B cell (primary cell): ENCODE measurements at regions of chr9 and their contacts with region 1.

Region 1: GRCh38 chr9:74952281-74953151 is at the start of gene C9orf40:
- DNase-seq: peak; percentile 93
- ATAC-seq: peak; percentile 89
- H3K4me3 ChIP-seq: peak within 1 kb of the TSS; percentile 65 to 91 (median 84)
- H3K4me3 Mint-ChIP-seq: peak within 1 kb of the TSS; percentile 95
- H3K27ac ChIP-seq: peak within 1 kb of the TSS; percentile 80 to 86
- H3K27ac Mint-ChIP-seq: peak within 1 kb of the TSS; percentile 95
- H3K4me1 ChIP-seq: peaks cover 9 to 15% of the 10 kb centered on the region in 2 donors
- H3K4me1 Mint-ChIP-seq: peaks cover 19% of the 10 kb centered on the region
- H3K27me3 ChIP-seq: no peaks in the 10 kb centered on the region
- H3K27me3 Mint-ChIP-seq: no peaks in the 10 kb centered on the region
- CTCF ChIP-seq: peak; percentile 78
- total RNA-seq, gene C9orf40: 5.0 and 5.8 TPM in 2 replicates

Region 2: GRCh38 chr9:74528207-74528606 is 424.3 kb before region 1 on chr9:
- CTCF ChIA-PET with region 1: no interaction called
- POLR2A ChIA-PET with region 1: no interaction called
- intact Hi-C with region 1: no loop called
- DNase-seq: no peak
- ATAC-seq: no peak
- H3K4me3 ChIP-seq: no peak overlapping the region
- H3K4me3 Mint-ChIP-seq: no peak overlapping the region
- H3K27ac ChIP-seq: no peak overlapping the region
- H3K27ac Mint-ChIP-seq: no peak overlapping the region
- H3K4me1 ChIP-seq: no peaks in the 10 kb centered on the region
- H3K4me1 Mint-ChIP-seq: no peaks in the 10 kb centered on the region
- H3K27me3 ChIP-seq: peaks cover 0 to 7% (median 0%) of the 10 kb centered on the region in 4 experiments
- H3K27me3 Mint-ChIP-seq: peaks cover 3% of the 10 kb centered on the region
- CTCF ChIP-seq: no peak

Region 3: GRCh38 chr9:74696520-74696919 is 256.0 kb before region 1 on chr9:
- CTCF ChIA-PET with region 1: no interaction called
- POLR2A ChIA-PET with region 1: no interaction called
- intact Hi-C with region 1: no loop called
- DNase-seq: no peak
- ATAC-seq: no peak
- H3K4me3 ChIP-seq: no peak overlapping the region
- H3K4me3 Mint-ChIP-seq: no peak overlapping the region
- H3K27ac ChIP-seq: no peak overlapping the region
- H3K27ac Mint-ChIP-seq: no peak overlapping the region
- H3K4me1 ChIP-seq: no peaks in the 10 kb centered on the region
- H3K4me1 Mint-ChIP-seq: no peaks in the 10 kb centered on the region
- H3K27me3 ChIP-seq: peaks cover 0 to 7% (median 0%) of the 10 kb centered on the region in 4 experiments
- H3K27me3 Mint-ChIP-seq: peaks cover 21% of the 10 kb centered on the region
- CTCF ChIP-seq: no peak

Region 4: GRCh38 chr9:75001719-75002422 is 49.4 kb after region 1 on chr9:
- CTCF ChIA-PET with region 1: interaction called, 9 read pairs
- POLR2A ChIA-PET with region 1: no interaction called
- intact Hi-C with region 1: loop called (anchors 1 kb)
- DNase-seq: peak; percentile 84
- ATAC-seq: peak; percentile 84
- H3K4me3 ChIP-seq: no peak overlapping the region
- H3K4me3 Mint-ChIP-seq: no peak overlapping the region
- H3K27ac ChIP-seq: no peak overlapping the region
- H3K27ac Mint-ChIP-seq: no peak overlapping the region
- H3K4me1 ChIP-seq: no peaks in the 10 kb centered on the region
- H3K4me1 Mint-ChIP-seq: peaks cover 5% of the 10 kb centered on the region
- H3K27me3 ChIP-seq: no peaks in the 10 kb centered on the region
- H3K27me3 Mint-ChIP-seq: no peaks in the 10 kb centered on the region
- CTCF ChIP-seq: peak; percentile 95

Region 5: DNA sequence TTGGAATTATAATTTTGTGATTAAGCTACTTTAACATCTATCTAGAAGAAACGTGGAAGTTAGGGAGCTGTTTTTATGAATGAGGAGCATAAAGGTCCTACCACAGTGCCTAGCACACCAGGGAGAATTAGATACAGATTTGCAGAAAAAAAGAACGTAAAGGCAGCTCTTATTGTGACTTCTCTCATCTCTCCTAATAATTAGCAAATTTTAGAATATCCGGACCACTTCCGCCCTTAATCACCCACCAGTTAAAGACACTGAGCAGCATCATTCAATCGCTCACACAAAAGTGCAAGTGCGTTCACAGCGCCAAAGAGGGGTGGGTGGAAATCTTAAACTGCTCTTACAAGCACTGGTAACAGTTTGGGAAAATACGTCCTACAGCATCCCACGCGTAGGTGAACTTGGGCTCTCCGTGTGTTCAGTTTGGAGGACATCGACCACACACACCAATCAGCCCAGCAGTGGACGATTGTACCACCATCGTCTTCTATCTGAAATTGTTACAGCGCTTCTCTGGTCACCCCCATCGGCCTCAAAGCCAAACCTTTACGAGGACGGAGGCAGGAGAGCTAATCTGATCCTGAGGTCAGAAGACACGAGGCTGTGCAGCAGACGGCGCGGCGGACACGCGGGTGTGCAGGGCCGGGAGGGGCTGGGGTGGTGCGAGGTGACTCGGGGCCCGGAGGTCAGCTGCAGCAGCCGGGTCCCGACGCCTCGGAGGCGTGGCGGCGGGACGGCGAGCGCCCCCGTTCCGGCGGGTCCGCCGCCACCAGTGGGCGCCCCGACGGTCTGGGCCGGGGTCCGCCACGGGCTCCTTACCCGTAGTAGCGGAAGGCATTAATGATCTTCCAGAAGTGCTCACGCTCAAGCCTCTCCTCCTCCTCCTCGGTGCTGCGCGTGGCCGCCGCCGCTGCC is 74.9 kb after region 1 on chr9:
- CTCF ChIA-PET with region 1: interaction called, 27 read pairs
- POLR2A ChIA-PET with region 1: interaction called, 10 read pairs
- intact Hi-C with region 1: loop called (anchors 1 kb)
- DNase-seq: no peak
- ATAC-seq: peak; percentile 28
- H3K4me3 ChIP-seq: peak overlapping the region; percentile 52 to 85 (median 71)
- H3K4me3 Mint-ChIP-seq: peak overlapping the region; percentile 99
- H3K27ac ChIP-seq: peak overlapping the region; percentile 53 to 85
- H3K27ac Mint-ChIP-seq: peak overlapping the region; percentile 98
- H3K4me1 ChIP-seq: peaks cover 17 to 19% of the 10 kb centered on the region in 2 donors
- H3K4me1 Mint-ChIP-seq: peaks cover 33% of the 10 kb centered on the region
- H3K27me3 ChIP-seq: no peaks in the 10 kb centered on the region
- H3K27me3 Mint-ChIP-seq: no peaks in the 10 kb centered on the region
- CTCF ChIP-seq: no peak

Region 6: GRCh38 chr9:75071530-75072124 is 119.1 kb after region 1 on chr9:
- CTCF ChIA-PET with region 1: interaction called, 5 read pairs
- POLR2A ChIA-PET with region 1: no interaction called
- intact Hi-C with region 1: loop called (anchors 2 kb)
- DNase-seq: no peak
- ATAC-seq: peak; percentile 54
- H3K4me3 ChIP-seq: no peak overlapping the region
- H3K4me3 Mint-ChIP-seq: no peak overlapping the region
- H3K27ac ChIP-seq: no peak overlapping the region
- H3K27ac Mint-ChIP-seq: peak overlapping the region; percentile 28
- H3K4me1 ChIP-seq: peaks cover 3 to 6% of the 10 kb centered on the region in 2 donors
- H3K4me1 Mint-ChIP-seq: peaks cover 10% of the 10 kb centered on the region
- H3K27me3 ChIP-seq: no peaks in the 10 kb centered on the region
- H3K27me3 Mint-ChIP-seq: no peaks in the 10 kb centered on the region
- CTCF ChIP-seq: no peak

Region 7: GRCh38 chr9:75088260-75088905 is 135.9 kb after region 1 on chr9 and contains the start of gene OSTF1:
- CTCF ChIA-PET with region 1: interaction called, 39 read pairs
- POLR2A ChIA-PET with region 1: interaction called, 13 read pairs
- intact Hi-C with region 1: loop called (anchors 1 kb)
- DNase-seq: peak; percentile 96
- ATAC-seq: peak; percentile 86
- H3K4me3 ChIP-seq: peak within 1 kb of the TSS; percentile 88 to 99 (median 94)
- H3K4me3 Mint-ChIP-seq: peak within 1 kb of the TSS; percentile 95
- H3K27ac ChIP-seq: peak within 1 kb of the TSS; percentile 79 to 85
- H3K27ac Mint-ChIP-seq: peak within 1 kb of the TSS; percentile 94
- H3K4me1 ChIP-seq: peaks cover 57 to 58% of the 10 kb centered on the region in 2 donors
- H3K4me1 Mint-ChIP-seq: peaks cover 50% of the 10 kb centered on the region
- H3K27me3 ChIP-seq: no peaks in the 10 kb centered on the region
- H3K27me3 Mint-ChIP-seq: no peaks in the 10 kb centered on the region
- CTCF ChIP-seq: no peak
- total RNA-seq, gene OSTF1: 57.8 and 62.0 TPM in 2 replicates

Region 8: GRCh38 chr9:76393963-76394679 is 1441.6 kb after region 1 on chr9 and contains the start of gene RFK:
- CTCF ChIA-PET with region 1: no interaction called
- POLR2A ChIA-PET with region 1: no interaction called
- intact Hi-C with region 1: loop called (anchors 10 kb)
- DNase-seq: peak; percentile 95
- ATAC-seq: peak; percentile 92
- H3K4me3 ChIP-seq: peak within 1 kb of the TSS; percentile 93 to 98 (median 97)
- H3K4me3 Mint-ChIP-seq: peak within 1 kb of the TSS; percentile 94
- H3K27ac ChIP-seq: peak within 1 kb of the TSS; percentile 78 to 98
- H3K27ac Mint-ChIP-seq: peak within 1 kb of the TSS; percentile 98
- H3K4me1 ChIP-seq: peaks cover 9 to 15% of the 10 kb centered on the region in 2 donors
- H3K4me1 Mint-ChIP-seq: peaks cover 15% of the 10 kb centered on the region
- H3K27me3 ChIP-seq: no peaks in the 10 kb centered on the region
- H3K27me3 Mint-ChIP-seq: no peaks in the 10 kb centered on the region
- CTCF ChIP-seq: peak; percentile 61
- total RNA-seq, gene RFK: 7.3 and 9.0 TPM in 2 replicates